ENCODE measurements at regions of chr4 and their contacts with region 1.

Region 1: DNA sequence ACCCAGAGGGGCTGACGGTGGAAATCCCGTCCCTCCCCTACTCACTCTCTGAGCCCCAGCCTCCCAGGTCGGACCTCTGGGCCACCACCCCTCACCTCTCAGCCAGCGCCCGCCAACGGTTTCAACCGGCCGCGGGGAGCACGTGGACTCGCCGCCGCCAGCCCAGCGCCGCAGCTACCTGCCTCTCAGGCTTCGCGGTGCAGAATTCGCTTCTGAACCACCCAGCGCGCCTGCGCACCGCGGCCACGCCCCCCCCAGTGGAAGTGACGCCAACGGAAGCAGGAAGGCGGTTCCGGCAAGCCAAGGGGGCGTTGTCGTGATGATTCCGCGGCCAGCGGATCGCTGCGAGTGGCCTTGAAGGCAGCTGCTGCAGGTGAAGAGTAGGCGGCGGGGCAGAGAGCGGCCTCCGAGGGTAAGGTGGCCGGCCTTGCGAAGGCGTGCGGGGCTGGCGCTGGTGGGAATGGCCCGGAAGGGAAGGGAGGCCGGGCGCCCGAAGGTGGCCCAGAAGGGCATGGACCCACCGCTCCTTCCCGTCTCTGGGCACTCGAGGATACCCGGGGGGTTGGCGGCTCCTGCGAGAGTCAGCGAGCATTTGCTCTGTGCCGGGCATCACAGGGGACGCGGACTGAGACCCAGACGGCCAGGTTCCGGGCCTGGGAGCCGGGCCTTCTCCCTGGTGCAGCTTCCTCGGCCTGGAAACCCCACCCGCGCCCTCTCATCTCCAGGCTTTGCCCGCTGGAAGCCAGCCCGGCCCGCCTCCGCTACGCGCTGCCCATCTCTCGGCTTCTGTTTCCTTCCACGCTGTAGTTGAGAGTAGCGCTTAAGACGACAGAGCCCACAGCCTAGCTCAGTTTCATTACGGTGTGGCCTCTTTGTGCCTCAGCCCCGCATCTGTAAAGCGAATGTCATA is at the starts of genes LYAR and ZBTB49:
- DNase-seq: peak; percentile 98
- ATAC-seq: peak; percentile 95
- H3K4me3 Mint-ChIP-seq: peak within 1 kb of the TSS; percentile 93
- H3K27ac Mint-ChIP-seq: peak within 1 kb of the TSS; percentile 77
- H3K4me1 Mint-ChIP-seq: peaks cover 35% of the 10 kb centered on the region
- H3K27me3 Mint-ChIP-seq: no peaks in the 10 kb centered on the region
- total RNA-seq, gene LYAR: 65.6 to 74.3 TPM
- total RNA-seq, gene ZBTB49: 3.3 to 3.8 TPM

Region 2: DNA sequence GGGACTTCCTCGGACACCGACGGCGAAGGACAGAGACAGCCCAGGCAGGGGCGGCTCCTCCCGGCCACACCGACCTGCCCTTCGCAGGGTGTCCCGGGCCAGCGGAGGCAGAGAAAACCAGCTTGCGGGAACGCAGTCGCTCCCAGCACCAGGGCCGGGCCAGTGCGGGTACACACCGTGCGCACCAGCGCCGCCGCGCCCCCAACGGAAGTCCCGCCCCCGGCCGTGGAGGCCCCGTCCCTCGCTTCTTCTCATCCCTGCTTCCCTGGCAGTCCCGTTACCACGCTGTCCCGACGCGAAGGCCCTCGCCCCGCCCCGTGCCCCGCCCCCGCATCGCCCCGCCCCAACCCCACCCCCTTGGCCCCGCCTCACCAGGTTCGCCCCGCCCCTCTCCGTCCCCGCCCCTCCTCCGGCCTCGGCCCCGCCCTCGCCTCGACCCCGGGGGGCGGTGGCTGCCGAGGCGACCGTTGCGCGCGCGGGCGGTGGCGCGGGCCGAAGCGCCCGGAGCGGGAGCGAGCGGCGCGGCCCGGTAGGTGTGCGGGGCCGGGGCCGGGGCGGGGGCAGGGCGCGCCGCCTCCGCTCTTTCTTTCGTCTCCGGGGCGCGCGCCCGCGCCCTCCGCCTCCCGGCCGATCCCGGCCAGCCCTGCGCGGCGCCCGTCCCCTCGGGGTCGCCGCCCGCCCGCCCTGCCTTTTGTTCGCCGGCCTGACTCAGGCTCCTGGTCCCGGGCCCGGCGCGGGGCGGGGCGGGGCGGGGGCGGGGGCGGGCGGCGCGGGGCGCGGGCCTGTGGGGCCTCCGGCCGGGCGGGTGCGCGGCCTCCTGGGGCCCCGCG is 997.4 kb before region 1 on chr4 and contains the start of gene RGS12:
- CTCF ChIA-PET with region 1: no interaction called
- POLR2A ChIA-PET with region 1: no interaction called
- intact Hi-C with region 1: loop called in 1 of 2 experiments (anchors 5 kb)
- DNase-seq: peak; percentile 93
- ATAC-seq: peak; percentile 95
- H3K4me3 Mint-ChIP-seq: peak within 1 kb of the TSS; percentile 81
- H3K27ac Mint-ChIP-seq: peak within 1 kb of the TSS; percentile 64
- H3K4me1 Mint-ChIP-seq: peaks cover 11% of the 10 kb centered on the region
- H3K27me3 Mint-ChIP-seq: peaks cover 4% of the 10 kb centered on the region
- total RNA-seq, gene RGS12: 8.0 to 9.4 TPM

Region 3: GRCh38 chr4:4659871-4660651 is 369.9 kb after region 1 on chr4:
- CTCF ChIA-PET with region 1: no interaction called
- POLR2A ChIA-PET with region 1: no interaction called
- intact Hi-C with region 1: no loop called
- DNase-seq: no peak
- ATAC-seq: no peak
- H3K4me3 Mint-ChIP-seq: no peak overlapping the region
- H3K27ac Mint-ChIP-seq: no peak overlapping the region
- H3K4me1 Mint-ChIP-seq: no peaks in the 10 kb centered on the region
- H3K27me3 Mint-ChIP-seq: no peaks in the 10 kb centered on the region

Measured in activated CD4-positive, alpha-beta T cell treated with anti-CD3 and anti-CD28 coated beads for 36 hours (primary cell).